Vagina (tissue), 2 donors: ENCODE measurements at regions of chr5 and their contacts with region 1.

Region 1: DNA sequence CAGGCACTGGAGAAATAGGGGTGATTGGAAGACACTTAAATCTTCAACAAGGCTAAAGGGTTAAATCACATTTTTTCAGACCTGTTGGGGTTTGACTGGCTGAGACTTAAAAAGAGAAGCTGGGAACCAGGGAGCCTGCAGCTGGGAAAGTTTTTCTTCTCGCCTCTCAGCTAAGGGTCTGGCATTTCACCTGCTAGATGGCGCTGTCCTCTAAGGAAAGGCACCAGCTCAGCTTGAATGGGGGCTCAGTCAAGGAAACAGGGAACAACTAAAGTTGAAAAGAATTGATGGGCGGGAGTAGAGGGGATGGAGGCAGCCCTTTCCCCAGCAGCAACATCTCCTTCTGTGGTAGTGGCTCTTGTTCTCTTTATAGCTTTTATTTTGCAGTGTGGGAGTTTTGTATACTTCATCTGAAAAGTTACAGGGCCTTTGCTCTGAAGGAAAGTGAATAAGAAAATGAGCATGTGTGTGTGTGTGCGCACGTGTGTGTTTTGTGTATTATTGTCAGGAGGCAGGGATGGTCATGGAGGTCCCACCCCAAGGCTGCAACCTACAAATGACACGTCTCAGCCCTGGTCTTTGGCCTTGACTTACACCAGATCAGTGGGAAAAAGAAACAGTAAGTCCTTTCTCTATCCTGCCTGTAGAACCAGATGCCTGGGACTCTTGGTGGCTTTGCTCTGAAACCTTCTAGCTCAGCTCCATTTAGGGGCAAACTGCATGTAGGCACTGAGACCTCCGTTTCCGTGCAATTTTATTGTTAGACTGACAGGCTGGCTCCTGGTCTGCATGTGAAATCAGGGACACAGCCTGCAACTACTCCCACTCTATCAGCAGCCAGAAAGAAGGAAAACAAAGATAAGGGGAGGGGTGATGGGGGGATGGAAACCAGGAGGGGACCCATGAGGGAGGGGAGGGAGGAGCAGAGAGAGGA is 316.2 kb upstream of the CLINT1 start:
- DNase-seq: no peak
- H3K4me3 ChIP-seq: no peak overlapping the region
- H3K27ac ChIP-seq: peak overlapping the region; percentile 33
- H3K4me1 ChIP-seq: peaks cover 13% of the 10 kb centered on the region
- H3K27me3 ChIP-seq: no peaks in the 10 kb centered on the region
- CTCF ChIP-seq: peak; percentile 6 to 80 (median 57)
- POLR2A ChIP-seq: no peak

Region 2: DNA sequence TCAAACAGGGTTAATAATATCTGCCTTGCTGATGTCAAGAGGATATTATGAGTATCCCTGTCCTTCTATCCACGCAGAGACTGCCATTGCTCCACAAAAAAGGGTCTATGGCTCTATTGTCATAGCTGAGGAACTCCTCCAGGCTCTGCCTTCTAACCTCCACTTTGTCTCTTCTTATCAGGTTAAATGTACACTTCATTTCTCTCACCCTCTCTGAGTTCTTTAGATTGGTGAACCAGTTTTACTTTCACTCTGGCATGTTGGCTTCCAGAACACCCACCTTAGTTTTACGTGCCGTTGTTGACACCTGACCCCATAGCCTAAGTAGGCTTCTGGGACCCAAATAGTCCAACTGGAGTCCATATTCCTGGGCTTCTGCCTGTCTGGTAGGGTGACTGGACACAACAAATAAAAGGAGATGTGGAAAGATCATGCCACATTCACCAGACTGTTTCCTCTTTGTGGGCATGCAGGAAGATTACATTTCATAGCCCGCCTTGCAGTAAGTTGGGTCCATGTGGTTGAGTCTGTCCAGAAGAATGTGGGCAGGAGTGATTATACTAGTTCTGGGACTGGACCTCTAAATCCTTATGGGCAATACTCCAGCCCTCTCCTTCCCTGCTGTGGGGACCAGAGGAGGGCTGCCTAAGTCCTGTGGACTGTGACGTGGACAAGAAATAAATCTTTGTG is 34.2 kb after region 1 on chr5:
- intact Hi-C with region 1: loop called (anchors 2 kb)
- DNase-seq: no peak
- H3K4me3 ChIP-seq: no peak overlapping the region
- H3K27ac ChIP-seq: no peak overlapping the region
- H3K4me1 ChIP-seq: no peaks in the 10 kb centered on the region
- H3K27me3 ChIP-seq: no peaks in the 10 kb centered on the region
- CTCF ChIP-seq: no peak
- POLR2A ChIP-seq: no peak

Region 3: DNA sequence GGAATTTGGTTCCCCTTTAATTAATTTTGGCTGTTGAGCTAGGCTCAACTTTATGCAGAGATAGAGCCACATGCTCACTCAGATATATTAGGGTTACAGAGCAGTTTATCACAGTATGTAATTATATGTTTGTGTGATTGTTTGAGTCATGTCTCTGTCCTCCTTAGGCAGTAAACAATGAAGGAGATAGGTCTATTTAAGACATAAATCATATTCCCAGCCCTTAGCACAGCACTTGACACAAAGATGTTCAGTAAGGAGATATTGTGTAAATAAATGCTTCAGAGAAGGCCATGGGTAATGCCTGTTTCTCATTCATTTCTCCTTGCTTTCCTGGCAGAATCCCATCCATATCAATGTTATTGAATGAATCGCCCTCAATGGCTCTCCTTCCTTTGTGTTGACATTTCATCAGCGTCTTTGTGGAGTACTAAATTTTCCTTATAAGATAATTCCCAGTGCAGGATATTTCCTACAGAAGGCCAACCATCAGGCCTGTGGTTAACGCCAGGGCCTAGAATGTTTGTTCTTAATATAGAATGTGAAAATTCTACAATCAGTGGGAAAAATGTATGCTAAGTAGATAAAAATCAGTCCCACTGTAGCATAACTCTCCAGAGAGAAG is 516.6 kb after region 1 on chr5:
- intact Hi-C with region 1: loop called (anchors 5 kb)
- DNase-seq: no peak
- H3K4me3 ChIP-seq: no peak overlapping the region
- H3K27ac ChIP-seq: no peak overlapping the region
- H3K4me1 ChIP-seq: no peaks in the 10 kb centered on the region
- H3K27me3 ChIP-seq: no peaks in the 10 kb centered on the region
- CTCF ChIP-seq: no peak
- POLR2A ChIP-seq: no peak

Region 4: GRCh38 chr5:159040181-159040580 is 865.0 kb after region 1 on chr5:
- intact Hi-C with region 1: loop called (anchors 5 kb)
- DNase-seq: no peak
- H3K4me3 ChIP-seq: no peak overlapping the region
- H3K27ac ChIP-seq: peak overlapping the region; percentile 15
- H3K4me1 ChIP-seq: peaks cover 35% of the 10 kb centered on the region
- H3K27me3 ChIP-seq: no peaks in the 10 kb centered on the region
- CTCF ChIP-seq: no peak
- POLR2A ChIP-seq: no peak

Region 5: GRCh38 chr5:159106569-159107282 is 931.5 kb after region 1 on chr5:
- intact Hi-C with region 1: loop called (anchors 2 kb)
- DNase-seq: no peak
- H3K4me3 ChIP-seq: peak overlapping the region; percentile 20 to 29
- H3K27ac ChIP-seq: no peak overlapping the region
- H3K4me1 ChIP-seq: peaks cover 10% of the 10 kb centered on the region
- H3K27me3 ChIP-seq: no peaks in the 10 kb centered on the region
- CTCF ChIP-seq: peak; percentile 51 to 92 (median 92)
- POLR2A ChIP-seq: no peak

Region 6: GRCh38 chr5:159899067-159900049 is 1724.2 kb after region 1 on chr5:
- intact Hi-C with region 1: loop called (anchors 5 kb)
- DNase-seq: no peak
- H3K4me3 ChIP-seq: no peak overlapping the region
- H3K27ac ChIP-seq: no peak overlapping the region
- H3K4me1 ChIP-seq: no peaks in the 10 kb centered on the region
- H3K27me3 ChIP-seq: no peaks in the 10 kb centered on the region
- CTCF ChIP-seq: no peak
- POLR2A ChIP-seq: no peak